Posterior vena cava (tissue), 2 donors: ENCODE measurements at regions of chr4 and their contacts with region 1.

Region 1: GRCh38 chr4:139229534-139230039 is 50.4 kb downstream of the MGARP start:
- DNase-seq: no peak

Region 2: GRCh38 chr4:139295206-139295941 is 65.8 kb after region 1 on chr4:
- intact Hi-C with region 1: loop called (anchors 5 kb)
- DNase-seq: peak; percentile 100